Posterior cingulate gyrus (tissue), 11 donors: ENCODE measurements at regions of chr11 and their contacts with region 1.

Region 1: GRCh38 chr11:57644748-57645688 is 4.7 kb downstream of the YPEL4 start:
- DNase-seq: peak; percentile 63 to 97 (median 85)

Region 2: DNA sequence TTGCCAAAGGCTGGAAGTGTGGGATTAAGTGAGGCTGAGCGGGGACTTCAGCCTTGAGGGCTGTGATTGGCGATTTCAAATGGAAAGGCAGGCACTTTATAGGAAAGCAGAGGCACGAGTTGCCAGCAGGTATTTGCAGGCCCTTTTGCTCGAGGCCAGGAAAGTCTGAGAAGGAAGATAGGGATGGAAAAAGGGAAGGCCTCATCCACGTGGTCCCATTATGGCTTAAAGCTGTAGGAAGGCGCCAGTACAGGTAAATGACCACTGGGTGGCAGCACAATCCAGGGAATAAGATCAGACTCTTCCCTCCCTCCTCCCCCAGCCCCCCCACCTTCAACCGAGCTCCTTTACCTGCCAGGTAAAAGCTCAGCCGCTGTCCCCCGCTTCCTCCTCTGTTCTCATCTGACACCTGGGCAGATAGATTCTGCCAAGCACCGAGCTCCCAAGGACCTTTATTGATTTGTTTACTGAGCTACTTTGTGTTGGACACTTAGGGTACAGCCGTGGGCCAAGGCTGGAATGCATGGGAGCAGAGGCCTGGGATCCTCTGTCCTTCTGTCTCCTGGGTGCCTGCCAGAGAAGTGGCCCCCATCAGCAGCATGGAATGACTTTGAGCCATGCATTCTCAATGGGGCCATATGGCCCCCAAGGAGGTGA is 299.3 kb before region 1 on chr11:
- intact Hi-C with region 1: loop called (anchors 2 kb)
- DNase-seq: peak; percentile 34 to 93 (median 72)

Region 3: DNA sequence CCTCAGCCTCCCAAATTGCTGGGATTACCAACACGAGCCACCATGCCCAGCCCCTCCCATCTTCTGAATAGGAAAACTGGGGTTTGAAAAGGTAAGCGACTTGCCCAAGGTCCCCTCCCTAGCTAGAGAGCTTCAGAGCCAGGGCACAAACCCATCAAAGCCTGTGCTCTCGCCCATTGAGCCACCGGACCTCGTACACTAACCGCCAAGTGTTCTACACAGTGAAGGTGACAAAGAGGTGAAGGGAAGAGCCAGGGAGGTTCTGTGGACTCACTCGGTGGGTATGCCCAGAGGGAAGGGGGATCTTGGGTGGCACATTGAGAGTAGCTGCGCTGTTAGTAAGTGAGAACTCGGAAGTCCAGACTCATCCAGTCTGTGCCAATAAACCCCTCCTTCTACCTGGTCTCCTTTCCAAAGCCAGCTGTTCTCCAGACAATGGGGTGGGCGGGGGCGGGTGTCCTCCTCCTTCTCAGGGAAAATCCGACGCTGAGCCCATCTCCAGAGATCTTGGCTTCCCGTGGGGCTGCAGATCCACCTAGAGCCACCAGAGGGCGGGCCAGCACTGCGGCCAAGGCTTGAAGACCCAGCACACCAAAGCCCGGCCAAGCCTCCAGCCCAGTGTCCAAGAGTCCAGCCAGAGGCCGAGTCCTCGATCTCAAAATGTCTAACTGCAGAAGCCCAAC is 187.9 kb before region 1 on chr11:
- intact Hi-C with region 1: loop called (anchors 5 kb)
- DNase-seq: peak; percentile 78 to 98 (median 90)

Region 4: GRCh38 chr11:57567515-57568329 is 77.3 kb before region 1 on chr11 and contains the start of gene UBE2L6:
- intact Hi-C with region 1: loop called (anchors 1 kb)
- DNase-seq: peak; percentile 51 to 96 (median 80)

Region 5: GRCh38 chr11:57713835-57714234 is 68.8 kb after region 1 on chr11:
- intact Hi-C with region 1: no loop called
- DNase-seq: no peak